ENCODE measurements at regions of chr2 and their contacts with region 1.

Region 1: GRCh38 chr2:41782306-41783158 is 265.3 kb upstream of the PKDCC start:
- DNase-seq: no peak

Region 2: GRCh38 chr2:41000374-41000773 is 782.2 kb before region 1 on chr2:
- intact Hi-C with region 1: no loop called
- DNase-seq: no peak

Region 3: DNA sequence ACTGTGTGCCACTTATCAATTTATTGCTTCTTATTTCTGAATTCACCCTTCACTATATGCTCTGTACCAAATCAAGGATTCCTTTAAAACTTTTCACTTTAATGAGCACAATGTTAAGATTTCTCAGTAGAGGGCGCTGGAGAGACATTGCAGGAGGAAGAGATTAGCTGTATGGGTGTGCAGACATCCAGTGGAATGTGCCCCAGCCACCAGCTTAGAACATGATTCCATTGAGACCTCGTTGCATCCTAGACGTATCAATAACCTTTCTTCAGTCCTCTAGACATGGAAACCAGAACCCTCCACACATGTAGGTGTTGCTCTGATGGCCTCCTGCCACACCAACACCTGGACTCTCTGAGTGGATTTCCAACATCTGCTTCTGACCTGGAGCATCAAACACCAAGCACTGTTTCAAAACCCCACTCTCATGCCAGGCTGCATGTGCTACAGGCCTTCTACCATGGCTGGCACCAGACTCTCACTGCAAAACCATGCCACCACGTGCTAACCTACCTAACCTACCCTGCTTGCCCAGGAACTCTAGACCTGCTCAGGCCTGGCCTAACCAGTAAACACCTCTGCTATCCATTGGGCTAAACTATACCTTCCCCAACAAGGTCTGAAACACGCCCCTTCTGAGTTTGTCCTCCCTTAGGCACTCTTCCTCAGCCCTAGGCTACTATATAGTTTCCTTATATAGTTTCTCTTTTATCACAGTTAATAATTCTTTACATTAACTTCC is 367.9 kb before region 1 on chr2:
- intact Hi-C with region 1: loop called (anchors 10 kb)
- DNase-seq: no peak

Region 4: DNA sequence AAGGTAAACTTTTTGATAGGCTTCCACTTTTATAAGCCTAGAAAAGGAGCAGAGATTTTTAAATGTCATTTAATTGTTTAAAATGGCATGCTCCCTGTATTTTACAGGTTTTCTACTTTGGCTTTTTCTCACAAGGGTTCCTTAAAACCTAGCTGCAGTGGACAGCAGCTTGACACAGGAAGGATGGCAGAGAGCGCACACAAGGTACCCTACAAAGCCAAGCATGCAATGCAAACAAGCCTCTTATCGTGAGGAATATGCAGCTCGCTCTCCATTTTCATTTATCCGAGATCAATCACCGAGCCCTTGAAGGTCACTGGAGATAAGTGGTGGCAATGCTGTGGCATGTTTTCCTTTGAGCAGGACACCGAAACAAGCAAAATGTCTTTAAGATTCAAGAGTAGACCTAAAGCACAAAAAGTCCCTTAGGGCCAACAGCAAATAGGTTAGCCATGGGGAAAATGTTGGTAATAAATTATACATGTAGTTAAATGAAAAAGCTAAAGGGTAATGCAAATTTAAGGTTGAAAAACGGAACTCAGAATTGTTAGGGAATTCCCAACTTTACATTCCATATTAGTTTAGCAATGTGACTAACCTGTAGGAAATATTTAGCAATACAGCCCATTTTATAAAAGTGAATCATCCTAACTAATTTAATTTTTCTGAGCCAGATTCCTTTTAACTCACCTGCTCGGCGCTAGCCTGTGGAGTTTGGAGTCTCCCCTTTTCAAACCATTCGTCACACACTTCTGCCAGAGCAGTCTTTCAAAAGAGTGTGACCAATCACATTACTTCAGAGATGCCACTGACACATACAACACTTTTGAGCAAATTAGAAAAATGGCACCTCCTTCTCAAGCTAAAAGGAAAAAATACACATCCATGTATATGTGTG is 72.6 kb before region 1 on chr2:
- intact Hi-C with region 1: loop called (anchors 5 kb)
- DNase-seq: no peak